A549 (cell line): ENCODE measurements at regions of chr2 and their contacts with region 1.

Region 1: DNA sequence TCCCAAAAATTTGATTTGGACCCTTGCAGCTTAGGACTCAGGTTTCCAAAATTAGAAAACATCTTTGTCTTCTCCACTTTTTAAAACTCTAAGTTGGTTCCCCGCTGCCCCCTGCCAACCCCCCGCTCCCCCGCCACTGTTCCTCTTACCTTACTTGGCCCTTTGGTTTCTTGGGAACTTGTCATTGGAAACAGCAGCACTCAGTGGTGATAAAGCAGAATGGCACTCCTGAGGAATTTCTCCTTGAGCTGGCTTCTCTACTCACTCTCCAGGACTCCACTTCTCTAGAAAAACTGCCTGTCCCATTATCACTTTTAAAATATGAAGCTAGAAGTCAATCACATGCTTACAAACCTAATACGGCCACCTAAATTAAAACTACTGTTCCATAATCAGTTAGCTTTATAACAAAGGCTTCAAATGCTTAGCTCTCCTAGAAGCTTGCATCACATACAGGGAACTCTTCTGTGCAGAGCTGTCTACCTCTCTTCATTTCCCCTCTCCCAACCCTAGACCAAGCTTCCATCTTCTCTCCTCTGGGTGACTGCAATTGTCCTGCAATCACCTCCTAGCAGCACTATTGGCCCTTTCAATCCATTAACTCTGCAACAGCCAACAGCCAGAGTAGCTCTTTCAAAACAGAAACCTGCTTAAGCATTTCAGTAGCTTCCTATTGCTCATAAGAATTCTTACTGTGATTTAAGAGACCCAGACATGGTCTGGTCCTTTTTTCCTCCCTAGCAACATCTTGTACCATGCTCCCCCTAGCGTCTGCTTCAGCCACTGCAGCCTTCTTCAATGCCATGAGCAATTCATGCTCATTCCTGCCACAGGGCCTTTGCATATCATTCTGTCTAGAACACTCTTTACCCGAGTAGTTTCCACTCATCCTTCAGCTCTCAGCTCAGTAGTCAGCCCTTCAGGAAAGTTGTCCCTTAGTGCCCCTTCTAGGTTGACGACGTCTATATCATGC is 15.2 kb upstream of the PLEKHM3 start:
- DNase-seq: peak; percentile 53 to 78
- ATAC-seq: peak; percentile 90 to 91
- H3K4me3 ChIP-seq: no peak overlapping the region
- H3K27ac ChIP-seq: no peak overlapping the region; a peak in 1 of 6 replicates
- H3K4me1 ChIP-seq: no peaks in the 10 kb centered on the region
- CTCF ChIP-seq: peak; percentile 68
- EP300 ChIP-seq: no peak
- POLR2A ChIP-seq: no peak
- RAD21 ChIP-seq: peak; percentile 58 to 76

Region 2: DNA sequence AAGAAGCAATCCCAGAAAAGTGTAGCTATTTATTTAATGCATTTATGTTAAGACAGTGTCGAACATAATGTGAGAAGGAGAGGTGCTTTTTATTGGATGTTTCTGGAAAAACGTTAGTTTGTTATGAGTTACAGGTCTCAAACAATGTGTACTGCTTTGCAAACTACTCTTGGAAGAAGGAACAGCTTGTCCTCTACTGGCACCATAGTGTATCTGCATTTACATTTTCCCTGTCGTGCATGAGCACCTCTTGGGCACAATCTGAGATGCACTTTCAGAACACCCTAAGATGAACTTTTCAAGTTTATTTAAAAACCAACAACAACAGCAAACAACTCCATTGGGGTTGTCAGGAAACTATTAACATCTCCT is 306.2 kb before region 1 on chr2:
- CTCF ChIA-PET with region 1: interaction called, 14 read pairs
- POLR2A ChIA-PET with region 1: no interaction called
- DNase-seq: peak in 1 of 2 experiments; percentile 75
- ATAC-seq: peak; percentile 97 to 99
- H3K4me3 ChIP-seq: no peak overlapping the region
- H3K27ac ChIP-seq: peak overlapping the region in 1 of 2 experiments; percentile 9; a peak in 1 of 6 replicates
- H3K4me1 ChIP-seq: peaks cover 27% of the 10 kb centered on the region
- CTCF ChIP-seq: peak; percentile 83
- EP300 ChIP-seq: no peak
- POLR2A ChIP-seq: no peak
- RAD21 ChIP-seq: peak; percentile 87 to 91

Region 3: DNA sequence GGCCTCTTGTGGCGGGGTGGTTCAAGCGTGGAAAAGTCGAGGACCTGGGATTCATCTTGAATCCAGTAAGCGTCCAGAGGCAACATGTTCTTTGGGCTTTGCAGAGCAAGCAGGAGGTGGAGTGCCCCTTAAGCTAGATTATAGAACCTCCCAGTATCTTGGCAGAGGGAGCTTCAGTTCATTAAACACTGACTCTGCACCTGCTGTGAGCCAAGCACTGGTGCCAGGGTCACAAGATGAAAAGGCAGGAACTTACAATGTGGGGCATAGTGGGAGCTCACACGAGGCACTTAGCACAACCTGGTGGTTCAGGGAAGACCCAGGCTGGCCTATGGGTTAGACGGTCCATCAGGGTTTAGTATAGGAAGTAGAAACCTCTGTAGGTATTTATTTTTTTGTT is 263.4 kb before region 1 on chr2:
- CTCF ChIA-PET with region 1: interaction called, 11 read pairs
- POLR2A ChIA-PET with region 1: no interaction called
- DNase-seq: no peak
- ATAC-seq: no peak
- H3K4me3 ChIP-seq: no peak overlapping the region
- H3K27ac ChIP-seq: 0 out of 6 replicates have a peak overlapping the region, but pooled peaks of 1 of the 2 experiments have one; percentile 3
- H3K4me1 ChIP-seq: peaks cover 22% of the 10 kb centered on the region
- CTCF ChIP-seq: no peak
- EP300 ChIP-seq: no peak
- POLR2A ChIP-seq: no peak
- RAD21 ChIP-seq: no peak

Region 4: DNA sequence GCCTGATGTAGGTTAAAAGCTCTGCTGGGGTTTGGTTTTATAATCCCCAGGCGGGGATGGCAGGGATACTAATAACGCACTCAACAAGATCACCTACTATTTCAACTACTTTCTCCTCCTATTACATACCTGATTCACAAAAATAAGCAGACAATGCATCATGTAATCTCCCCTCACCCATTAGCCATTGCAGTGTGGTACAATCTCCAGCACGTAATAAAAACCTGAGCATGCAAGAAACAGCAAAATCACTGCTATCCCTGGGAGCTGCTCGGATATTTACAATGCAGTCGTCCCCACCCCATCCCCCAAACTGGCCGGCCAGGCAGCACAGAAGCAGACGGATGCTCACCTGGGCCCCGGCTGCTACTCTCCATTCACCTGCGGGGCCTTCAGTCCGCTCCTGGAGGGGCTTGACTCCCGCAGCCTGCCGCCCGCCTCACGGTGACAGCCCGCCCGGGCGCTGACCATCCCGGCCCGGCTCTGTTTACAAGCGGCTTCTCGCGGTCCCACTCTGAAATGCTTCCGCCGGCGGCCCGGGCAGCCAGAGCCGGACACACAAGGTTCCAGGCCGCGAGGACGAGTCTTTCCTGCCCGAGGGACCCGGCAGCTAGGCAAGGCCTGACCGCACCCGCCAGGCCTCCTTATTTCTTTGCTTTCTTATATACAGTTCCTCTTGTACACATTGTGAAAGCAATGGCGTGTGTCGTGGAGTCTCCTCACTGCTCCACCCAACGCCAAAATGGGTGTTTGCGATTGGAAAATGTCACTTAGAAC is 15.3 kb before region 1 on chr2 and contains the start of gene PLEKHM3:
- CTCF ChIA-PET with region 1: interaction called, 28 read pairs
- POLR2A ChIA-PET with region 1: no interaction called
- DNase-seq: peak; percentile 50 to 91
- ATAC-seq: peak; percentile 98 to 99
- H3K4me3 ChIP-seq: peak within 1 kb of the TSS; percentile 63
- H3K27ac ChIP-seq: peak within 1 kb of the TSS; percentile 71 to 89
- H3K4me1 ChIP-seq: peaks cover 9% of the 10 kb centered on the region; the same call in 1 of the 3 replicates
- CTCF ChIP-seq: no peak
- EP300 ChIP-seq: no peak
- POLR2A ChIP-seq: peak; percentile 64
- RAD21 ChIP-seq: peak; percentile 16 to 34; a peak in 2 of 5 replicates
- polyA plus RNA-seq, gene PLEKHM3: 6.5 and 7.0 TPM in 2 replicates

Region 5: DNA sequence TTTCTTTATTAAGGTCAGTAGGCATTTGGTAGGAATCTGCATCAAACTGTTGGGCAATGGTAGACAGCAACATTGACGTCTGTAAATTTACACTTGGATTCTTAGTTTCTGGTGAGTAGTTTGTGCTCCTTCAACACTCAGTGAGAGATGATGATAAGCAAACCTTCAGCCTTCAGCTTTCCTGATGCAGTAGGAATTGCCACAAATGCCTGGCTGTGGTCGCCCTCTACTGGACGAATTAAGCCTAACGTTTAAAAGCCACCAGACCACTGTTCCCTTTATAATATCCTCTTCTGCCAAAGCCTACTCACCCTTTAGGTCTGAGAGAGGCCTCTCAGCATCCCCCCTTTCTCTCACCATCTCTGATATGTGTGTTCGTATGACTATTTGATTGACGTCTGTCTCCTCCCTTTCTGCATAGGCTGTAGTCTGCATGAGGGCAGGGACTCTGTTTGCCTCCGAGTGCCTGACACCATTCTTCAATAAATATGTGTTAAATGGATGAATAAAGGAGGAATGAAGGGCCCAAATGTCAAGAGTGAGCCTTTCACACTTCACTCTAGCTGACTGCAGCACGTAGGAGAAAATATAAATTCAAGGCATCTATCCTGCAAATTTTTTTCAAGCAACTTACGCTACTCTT is 31.9 kb after region 1 on chr2:
- CTCF ChIA-PET with region 1: interaction called, 13 read pairs
- POLR2A ChIA-PET with region 1: no interaction called
- DNase-seq: peak; percentile 54 to 69
- ATAC-seq: peak; percentile 95 to 97
- H3K4me3 ChIP-seq: no peak overlapping the region
- H3K27ac ChIP-seq: no peak overlapping the region
- H3K4me1 ChIP-seq: no peaks in the 10 kb centered on the region
- CTCF ChIP-seq: peak; percentile 87
- EP300 ChIP-seq: no peak
- POLR2A ChIP-seq: no peak
- RAD21 ChIP-seq: peak; percentile 91

Region 6: GRCh38 chr2:208669394-208669793 is 628.9 kb after region 1 on chr2:
- CTCF ChIA-PET with region 1: no interaction called
- POLR2A ChIA-PET with region 1: no interaction called
- DNase-seq: no peak
- ATAC-seq: no peak
- H3K4me3 ChIP-seq: no peak overlapping the region
- H3K27ac ChIP-seq: no peak overlapping the region
- H3K4me1 ChIP-seq: no peaks in the 10 kb centered on the region
- CTCF ChIP-seq: no peak
- EP300 ChIP-seq: no peak
- POLR2A ChIP-seq: no peak
- RAD21 ChIP-seq: no peak